CD8-positive, alpha-beta memory T cell (primary cell): ENCODE measurements at regions of chr7 and their contacts with region 1.

Region 1: GRCh38 chr7:100435401-100436304 is 644 bp downstream of the PPP1R35 start:
- DNase-seq: peak; percentile 33 to 68 (median 46)
- H3K4me3 ChIP-seq: peak overlapping the region; percentile 65
- H3K4me3 Mint-ChIP-seq: peak overlapping the region; percentile 89 to 99 (median 95)
- H3K27ac ChIP-seq: peak overlapping the region; percentile 89
- H3K27ac Mint-ChIP-seq: peak overlapping the region; percentile 85 to 98 (median 96)
- H3K4me1 ChIP-seq: peaks cover 37% of the 10 kb centered on the region
- H3K4me1 Mint-ChIP-seq: peaks cover 36 to 54% (median 38%) of the 10 kb centered on the region in 3 donors
- H3K27me3 ChIP-seq: no peaks in the 10 kb centered on the region
- H3K27me3 Mint-ChIP-seq: no peaks in the 10 kb centered on the region

Region 2: DNA sequence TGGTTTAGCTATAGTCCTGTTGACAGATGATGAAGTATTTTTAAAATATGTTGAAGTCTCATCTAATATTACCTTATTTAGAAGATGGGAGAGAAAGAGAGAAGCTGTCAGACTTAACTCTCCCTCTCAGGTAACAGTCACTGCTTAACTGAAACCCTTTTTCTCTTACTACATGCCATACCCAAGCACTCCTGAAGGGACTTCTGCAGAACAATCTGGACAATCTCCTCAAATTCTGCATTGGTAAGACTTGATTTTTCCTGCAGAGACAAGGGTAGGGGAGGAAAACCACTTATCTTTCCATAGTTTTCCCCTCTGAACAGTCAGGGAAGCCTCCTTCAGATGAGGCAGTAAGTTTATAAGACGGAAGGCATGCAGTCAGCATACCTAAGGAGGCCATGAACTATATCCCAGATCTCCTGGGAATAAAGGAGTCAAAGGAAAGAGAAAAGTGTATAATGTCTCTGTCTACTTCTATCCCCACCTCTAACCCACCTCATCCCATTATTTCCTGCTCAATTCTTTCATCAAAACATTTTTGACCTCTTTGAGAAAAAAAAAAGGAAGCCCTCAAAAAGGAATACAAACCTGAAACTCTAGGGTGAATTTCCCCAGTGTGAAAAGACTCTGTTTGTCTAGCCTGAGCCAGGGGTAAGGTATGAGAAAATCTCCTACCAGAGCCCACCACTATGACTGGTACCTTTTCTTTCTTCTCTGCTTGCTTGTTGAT is 16.6 kb before region 1 on chr7:
- CTCF ChIA-PET with region 1: no interaction called
- POLR2A ChIA-PET with region 1: no interaction called
- DNase-seq: no peak
- H3K4me3 ChIP-seq: no peak overlapping the region
- H3K4me3 Mint-ChIP-seq: peak overlapping the region in 1 of 7 donors; percentile 61
- H3K27ac ChIP-seq: no peak overlapping the region
- H3K27ac Mint-ChIP-seq: peak overlapping the region in 1 of 8 donors; percentile 52
- H3K4me1 ChIP-seq: no peaks in the 10 kb centered on the region
- H3K4me1 Mint-ChIP-seq: no peaks in the 10 kb centered on the region
- H3K27me3 ChIP-seq: no peaks in the 10 kb centered on the region
- H3K27me3 Mint-ChIP-seq: no peaks in the 10 kb centered on the region

Region 3: DNA sequence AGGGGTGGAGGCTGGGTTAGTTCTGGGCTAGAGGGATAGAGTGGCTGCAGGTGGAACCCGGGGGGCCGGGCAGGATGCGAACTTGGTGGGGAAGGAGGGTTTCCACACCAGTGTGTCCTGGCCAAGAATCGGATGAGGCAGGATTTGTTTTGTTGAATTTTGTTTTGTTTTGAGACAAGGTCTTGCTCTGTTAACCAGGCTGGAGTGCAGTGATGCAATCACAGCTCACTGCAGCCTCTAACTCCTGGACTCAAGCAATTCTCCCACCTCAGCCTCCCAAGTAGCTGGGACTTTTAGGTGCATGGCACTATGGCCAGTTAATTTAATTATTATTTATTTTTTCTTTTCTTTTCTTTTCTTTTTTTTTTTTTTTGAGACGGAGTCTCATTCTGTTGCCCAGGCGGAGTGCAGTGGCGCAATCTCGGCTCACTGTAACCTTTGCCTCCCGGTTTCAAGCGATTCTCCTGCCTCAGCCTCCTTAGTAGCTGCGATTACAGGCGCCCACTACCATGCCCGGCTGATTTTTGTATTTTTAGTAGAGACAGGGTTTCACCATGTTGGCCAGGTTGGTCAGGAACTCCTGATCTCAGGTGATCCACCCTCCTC is 13.6 kb after region 1 on chr7:
- CTCF ChIA-PET with region 1: interaction called, 13 read pairs
- POLR2A ChIA-PET with region 1: interaction called, 12 read pairs
- DNase-seq: no peak
- H3K4me3 ChIP-seq: no peak overlapping the region
- H3K4me3 Mint-ChIP-seq: peak overlapping the region in 1 of 7 donors; percentile 22
- H3K27ac ChIP-seq: no peak overlapping the region
- H3K27ac Mint-ChIP-seq: peak overlapping the region in 1 of 8 donors; percentile 52
- H3K4me1 ChIP-seq: peaks cover 15% of the 10 kb centered on the region
- H3K4me1 Mint-ChIP-seq: peaks cover 0 to 14% (median 7%) of the 10 kb centered on the region in 3 donors
- H3K27me3 ChIP-seq: no peaks in the 10 kb centered on the region
- H3K27me3 Mint-ChIP-seq: no peaks in the 10 kb centered on the region